ENCODE measurements at regions of chr7 and their contacts with region 1.

Region 1: GRCh38 chr7:117489911-117490310 is 10.1 kb downstream of the CFTR start:
- DNase-seq: no peak
- H3K4me3 ChIP-seq: no peak overlapping the region
- H3K27ac ChIP-seq: no peak overlapping the region
- H3K4me1 ChIP-seq: peaks cover 0 to 2% (median 0%) of the 10 kb centered on the region in 4 donors
- H3K27me3 ChIP-seq: no peaks in the 10 kb centered on the region
- CTCF ChIP-seq: no peak
- EP300 ChIP-seq: no peak
- POLR2A ChIP-seq: no peak

Region 2: DNA sequence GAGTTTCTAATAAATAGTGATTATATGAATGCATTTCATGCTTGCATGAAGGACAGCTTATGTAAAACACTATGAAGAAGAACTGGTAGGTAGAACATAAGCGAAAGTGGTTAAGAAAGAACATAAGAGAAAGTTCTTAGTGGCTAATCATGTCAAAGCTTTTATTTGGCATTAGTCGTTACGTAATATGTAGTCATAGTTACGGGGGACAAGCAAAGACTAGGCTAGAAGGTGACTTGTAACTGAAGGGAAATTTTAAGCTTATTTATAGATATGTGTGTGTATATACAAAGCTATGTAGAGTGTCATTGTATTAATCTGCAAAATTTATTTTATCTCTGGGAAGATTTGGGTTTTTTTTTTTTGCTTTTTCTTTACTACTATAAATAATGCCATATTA is 590.6 kb before region 1 on chr7:
- intact Hi-C with region 1: no loop called
- DNase-seq: no peak
- H3K4me3 ChIP-seq: no peak overlapping the region
- H3K27ac ChIP-seq: no peak overlapping the region
- H3K4me1 ChIP-seq: peaks cover 0 to 21% (median 12%) of the 10 kb centered on the region in 4 donors
- H3K27me3 ChIP-seq: no peaks in the 10 kb centered on the region
- CTCF ChIP-seq: no peak
- EP300 ChIP-seq: no peak
- POLR2A ChIP-seq: no peak

Region 3: GRCh38 chr7:117445206-117445605 is 44.7 kb before region 1 on chr7:
- intact Hi-C with region 1: no loop called
- DNase-seq: no peak
- H3K4me3 ChIP-seq: no peak overlapping the region
- H3K27ac ChIP-seq: no peak overlapping the region
- H3K4me1 ChIP-seq: no peaks in the 10 kb centered on the region
- H3K27me3 ChIP-seq: no peaks in the 10 kb centered on the region
- CTCF ChIP-seq: no peak
- EP300 ChIP-seq: no peak
- POLR2A ChIP-seq: no peak

Region 4: GRCh38 chr7:117550625-117551024 is 60.7 kb after region 1 on chr7:
- intact Hi-C with region 1: loop called (anchors 10 kb)
- DNase-seq: no peak
- H3K4me3 ChIP-seq: no peak overlapping the region
- H3K27ac ChIP-seq: no peak overlapping the region
- H3K4me1 ChIP-seq: no peaks in the 10 kb centered on the region
- H3K27me3 ChIP-seq: no peaks in the 10 kb centered on the region
- CTCF ChIP-seq: no peak
- EP300 ChIP-seq: no peak
- POLR2A ChIP-seq: no peak

Measured in sigmoid colon (tissue), 7 donors.